ENCODE measurements at regions of chr3 and their contacts with region 1.

Region 1: GRCh38 chr3:184561061-184561912 is at the start of gene EPHB3:
- DNase-seq: peak; percentile 99
- H3K4me3 ChIP-seq: peak within 1 kb of the TSS in 1 of 3 experiments; percentile 16
- H3K27ac ChIP-seq: no peak within 1 kb of the TSS
- H3K4me1 ChIP-seq: peaks cover 4% of the 10 kb centered on the region
- H3K27me3 ChIP-seq: peaks cover 44 to 55% of the 10 kb centered on the region in 2 experiments
- CTCF ChIP-seq: peak; percentile 98 to 99
- POLR2A ChIP-seq: no peak
- total RNA-seq, gene EPHB3: not detected in 2 replicates

Region 2: DNA sequence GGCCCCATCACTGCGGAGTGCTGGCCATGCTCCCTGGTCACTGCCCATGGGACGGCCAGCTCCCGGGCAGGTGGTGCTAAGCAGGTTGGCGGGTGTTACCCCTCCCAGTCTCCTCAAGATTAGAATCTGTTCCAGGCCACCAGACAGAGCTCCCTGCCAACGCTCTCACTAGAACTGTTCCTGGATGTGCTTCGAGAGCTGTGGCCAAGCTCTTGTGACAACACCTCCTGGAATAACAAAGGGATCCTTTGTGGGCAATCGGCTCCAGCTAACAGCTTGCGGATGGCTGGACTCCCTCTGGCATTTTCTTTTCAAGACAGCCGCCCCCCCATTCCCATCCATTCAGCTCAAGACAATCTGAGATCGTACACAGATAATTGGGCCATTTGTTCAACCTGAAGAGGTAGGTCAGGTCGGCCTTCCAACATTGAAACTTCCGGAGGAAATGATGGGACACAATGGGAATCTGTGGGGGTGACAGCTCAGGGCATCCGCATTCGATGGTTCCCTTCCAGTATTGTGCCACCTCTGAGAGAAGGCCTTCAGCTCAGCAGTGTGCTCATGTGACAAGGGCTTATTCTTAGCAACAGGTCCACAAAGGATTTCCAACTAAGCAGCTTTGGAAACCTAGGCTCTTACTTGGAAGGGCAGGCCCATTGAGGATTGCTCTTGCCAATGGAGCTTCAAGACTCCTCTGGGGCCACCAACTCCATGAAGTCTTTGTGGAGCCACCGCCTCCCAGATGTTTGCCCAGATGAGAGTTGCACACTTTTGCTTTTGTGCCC is 11.3 kb before region 1 on chr3:
- CTCF ChIA-PET with region 1: interaction called, 16 read pairs
- POLR2A ChIA-PET with region 1: no interaction called
- dilution Hi-C with region 1: no loop called
- intact Hi-C with region 1: no loop called
- DNase-seq: no peak
- H3K4me3 ChIP-seq: no peak overlapping the region
- H3K27ac ChIP-seq: no peak overlapping the region
- H3K4me1 ChIP-seq: no peaks in the 10 kb centered on the region
- H3K27me3 ChIP-seq: peaks cover 7% of the 10 kb centered on the region in 2 experiments
- CTCF ChIP-seq: no peak
- POLR2A ChIP-seq: no peak

Region 3: GRCh38 chr3:184619369-184619768 is 58.1 kb after region 1 on chr3:
- CTCF ChIA-PET with region 1: interaction called, 9 read pairs
- POLR2A ChIA-PET with region 1: no interaction called
- dilution Hi-C with region 1: no loop called
- intact Hi-C with region 1: loop called (anchors 1 kb)
- DNase-seq: peak; percentile 62
- H3K4me3 ChIP-seq: no peak overlapping the region
- H3K27ac ChIP-seq: peak overlapping the region; percentile 30
- H3K4me1 ChIP-seq: peaks cover 21% of the 10 kb centered on the region
- H3K27me3 ChIP-seq: peaks cover 0 to 3% of the 10 kb centered on the region in 2 experiments
- CTCF ChIP-seq: no peak
- POLR2A ChIP-seq: no peak

Region 4: DNA sequence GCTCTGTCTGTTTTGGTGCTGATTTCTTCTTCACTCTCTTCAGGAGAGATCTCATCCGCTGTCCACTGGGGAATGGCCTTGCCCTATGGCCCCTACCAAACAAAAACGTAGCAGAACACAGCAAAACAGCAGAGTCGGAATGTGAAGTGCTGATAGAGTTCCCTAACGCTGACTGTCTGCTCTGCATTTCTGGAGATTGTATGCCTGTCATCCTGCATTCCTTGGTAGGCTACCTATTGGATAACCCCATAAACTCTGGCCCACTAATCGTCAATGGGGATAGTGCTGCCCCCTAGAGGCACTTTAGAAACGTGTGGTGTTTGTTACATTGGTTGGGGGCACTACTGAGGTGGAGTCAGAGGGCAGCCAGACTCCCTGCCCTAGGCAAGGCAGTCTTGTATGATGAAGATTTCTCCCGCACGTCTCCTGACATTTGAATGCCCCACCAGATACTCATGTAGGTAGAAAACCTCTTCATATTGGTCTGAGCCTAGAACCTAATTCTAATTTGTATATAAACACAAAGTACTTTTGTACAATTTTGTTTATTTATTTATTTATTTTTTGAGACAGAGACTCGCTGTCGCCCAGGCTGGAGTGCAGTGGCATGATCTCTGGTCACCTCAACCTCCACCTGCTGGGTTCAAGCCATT is 166.2 kb after region 1 on chr3:
- CTCF ChIA-PET with region 1: interaction called, 14 read pairs
- POLR2A ChIA-PET with region 1: no interaction called
- dilution Hi-C with region 1: no loop called
- intact Hi-C with region 1: loop called (anchors 1 kb)
- DNase-seq: peak; percentile 65
- H3K4me3 ChIP-seq: no peak overlapping the region
- H3K27ac ChIP-seq: no peak overlapping the region
- H3K4me1 ChIP-seq: no peaks in the 10 kb centered on the region
- H3K27me3 ChIP-seq: peaks cover 3 to 7% of the 10 kb centered on the region in 2 experiments
- CTCF ChIP-seq: peak; percentile 73 to 74
- POLR2A ChIP-seq: no peak

Region 5: DNA sequence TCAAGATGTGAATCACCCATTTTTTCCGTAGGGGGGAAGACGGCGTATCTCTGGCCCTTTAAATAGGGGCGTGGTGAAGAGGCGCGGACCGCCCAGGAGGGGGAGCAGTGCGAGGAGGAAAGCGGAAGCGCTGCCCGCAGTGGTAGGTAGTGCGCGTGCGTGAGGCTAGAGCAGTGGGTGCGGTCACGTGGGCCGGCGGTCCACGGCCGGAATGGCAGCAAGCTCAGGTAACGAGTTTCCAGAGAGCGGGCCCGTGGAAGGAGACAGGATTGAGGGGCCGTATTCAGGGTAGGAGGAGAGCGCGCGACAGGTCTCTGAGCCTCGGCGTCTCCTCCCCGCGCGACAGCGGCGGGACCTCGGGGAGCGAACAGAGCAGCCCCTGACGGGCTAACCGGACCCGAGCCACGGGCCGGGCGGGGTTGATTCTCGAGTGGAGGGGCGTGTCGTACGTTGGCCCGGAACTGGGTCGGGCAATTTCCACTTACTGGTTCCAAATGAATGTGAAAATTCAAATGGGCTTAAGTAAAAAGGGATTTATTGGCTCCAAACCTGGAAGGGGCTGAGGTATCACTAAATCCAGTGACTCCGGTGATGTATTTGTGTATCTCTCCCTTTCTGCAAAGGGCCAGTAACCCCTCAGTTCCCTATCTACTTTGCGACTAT is 250.8 kb after region 1 on chr3 and contains the start of gene VPS8:
- CTCF ChIA-PET with region 1: interaction called, 11 read pairs
- POLR2A ChIA-PET with region 1: no interaction called
- dilution Hi-C with region 1: no loop called
- intact Hi-C with region 1: no loop called
- DNase-seq: peak; percentile 97
- H3K4me3 ChIP-seq: peak within 1 kb of the TSS; percentile 63 to 91 (median 80)
- H3K27ac ChIP-seq: no peak within 1 kb of the TSS
- H3K4me1 ChIP-seq: peaks cover 14% of the 10 kb centered on the region
- H3K27me3 ChIP-seq: peaks cover 4 to 7% of the 10 kb centered on the region in 2 experiments
- CTCF ChIP-seq: peak; percentile 46 to 70
- POLR2A ChIP-seq: peak; percentile 78
- total RNA-seq, gene VPS8: 45.4 and 51.6 TPM in 2 replicates